ENCODE measurements at regions of chr3 and their contacts with region 1.

Region 1: GRCh38 chr3:73874601-73875369 is 250.0 kb upstream of the PDZRN3 start:
- DNase-seq: no peak
- ATAC-seq: no peak

Region 2: DNA sequence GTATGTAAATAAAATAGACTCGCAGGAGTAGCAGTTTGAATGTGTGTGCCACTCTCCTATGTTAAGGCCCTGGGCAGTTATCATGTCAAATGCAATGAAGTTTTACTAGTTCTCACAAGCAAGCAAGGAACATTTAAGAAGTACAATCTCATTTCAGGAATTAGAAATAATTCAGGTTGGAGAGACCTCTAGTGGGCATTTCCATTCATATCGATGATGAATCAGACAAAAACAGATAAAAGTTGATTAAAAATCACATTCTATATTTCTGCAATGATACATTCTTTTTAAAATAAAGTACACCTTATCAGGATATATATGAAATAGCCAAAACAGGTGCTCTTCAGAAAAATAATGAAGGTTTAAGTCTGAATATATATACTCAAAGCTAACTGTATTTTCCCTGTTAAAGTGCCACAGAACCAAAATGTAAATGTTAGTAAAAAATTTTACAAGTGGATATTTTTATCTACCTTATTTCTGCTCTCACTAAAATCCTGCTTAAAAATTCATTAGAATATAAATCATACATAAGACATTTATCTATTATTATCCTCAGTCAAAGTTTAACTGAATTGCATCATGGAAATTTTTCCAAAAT is 1296.9 kb after region 1 on chr3:
- intact Hi-C with region 1: loop called (anchors 10 kb)
- DNase-seq: no peak
- ATAC-seq: no peak